Heart right ventricle (tissue), 16 donors: ENCODE measurements at regions of chr16 and their contacts with region 1.

Region 1: DNA sequence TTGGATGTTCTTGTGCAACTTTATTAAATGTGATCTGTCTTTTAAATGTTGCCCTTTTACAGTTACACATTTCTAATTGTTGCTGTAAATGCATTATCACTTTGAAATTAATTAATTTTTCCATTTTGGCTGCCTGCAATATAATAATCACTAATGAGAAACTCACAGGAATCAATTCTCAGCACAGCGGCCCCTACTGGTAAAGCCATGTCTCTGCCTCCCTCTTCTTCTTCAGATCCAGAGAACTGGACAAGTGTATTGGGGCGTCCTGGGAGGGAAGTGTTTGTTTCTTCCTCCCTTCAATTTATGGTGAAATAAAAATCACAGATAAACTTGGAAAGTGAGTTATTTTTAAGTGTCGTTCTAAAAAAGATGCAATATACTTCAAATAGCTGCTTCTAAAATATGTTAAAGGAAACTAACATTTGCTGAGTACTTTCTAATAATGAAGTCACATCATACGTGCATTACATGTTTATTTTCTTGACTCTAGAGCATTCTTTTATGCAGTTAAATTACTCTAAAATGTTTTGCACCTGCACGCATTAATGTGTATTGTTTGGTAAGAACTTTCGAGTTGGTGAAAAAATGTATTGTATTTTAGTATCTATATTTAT is 338.0 kb downstream of the WWOX start:
- DNase-seq: peak in 1 of 2 donors; percentile 19
- ATAC-seq: no peak
- H3K4me3 ChIP-seq: no peak overlapping the region
- H3K27ac ChIP-seq: no peak overlapping the region
- H3K4me1 ChIP-seq: no peaks in the 10 kb centered on the region
- H3K27me3 ChIP-seq: no peaks in the 10 kb centered on the region
- CTCF ChIP-seq: peak; percentile 65 to 95 (median 85)

Region 2: DNA sequence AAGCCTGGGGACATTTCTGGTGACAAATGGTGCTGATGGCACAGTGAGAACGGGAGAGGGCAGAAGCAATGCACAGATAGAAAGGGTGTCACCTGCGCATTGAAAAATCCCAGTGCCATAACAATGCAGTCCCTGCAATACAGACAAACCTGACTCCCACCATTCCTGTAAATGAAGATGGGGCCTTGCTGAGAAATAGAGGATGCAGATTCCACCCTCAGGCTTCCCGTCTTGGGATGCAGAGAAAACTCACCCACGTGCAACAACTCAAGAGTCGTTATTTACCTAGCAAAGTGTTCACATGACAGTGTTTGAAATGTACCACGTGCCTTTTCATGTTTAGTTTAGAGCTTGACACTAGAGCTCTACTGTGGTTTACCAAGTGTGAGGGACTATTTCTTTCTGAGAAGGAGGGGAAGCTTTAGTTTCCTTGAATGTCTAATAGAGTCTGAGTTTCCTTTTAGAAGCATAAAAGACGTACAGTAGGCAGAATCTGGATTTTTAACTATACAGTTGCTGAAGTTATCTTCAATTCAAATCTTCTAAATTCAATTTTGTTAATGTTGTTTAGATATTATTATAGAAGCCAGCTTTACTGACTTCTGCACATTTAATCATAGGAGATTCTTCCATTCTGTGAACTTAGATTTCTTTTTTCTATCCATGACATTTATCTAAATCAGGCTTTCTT is 302.4 kb before region 1 on chr16:
- intact Hi-C with region 1: loop called in 1 of 10 experiments (anchors 10 kb)
- DNase-seq: no peak
- ATAC-seq: no peak
- H3K4me3 ChIP-seq: no peak overlapping the region
- H3K27ac ChIP-seq: no peak overlapping the region
- H3K4me1 ChIP-seq: no peaks in the 10 kb centered on the region
- H3K27me3 ChIP-seq: no peaks in the 10 kb centered on the region
- CTCF ChIP-seq: no peak

Region 3: GRCh38 chr16:78235168-78235800 is 202.2 kb before region 1 on chr16:
- intact Hi-C with region 1: loop called in 5 of 10 experiments (anchors 10 kb)
- DNase-seq: peak; percentile 64 to 71
- ATAC-seq: peak in 7 of 8 donors; percentile 53 to 79 (median 68)
- H3K4me3 ChIP-seq: no peak overlapping the region
- H3K27ac ChIP-seq: no peak overlapping the region
- H3K4me1 ChIP-seq: peaks cover 0 to 20% (median 6%) of the 10 kb centered on the region in 9 donors
- H3K27me3 ChIP-seq: no peaks in the 10 kb centered on the region
- CTCF ChIP-seq: peak; percentile 79 to 93 (median 89)

Region 4: GRCh38 chr16:78249068-78249467 is 188.4 kb before region 1 on chr16:
- intact Hi-C with region 1: loop called in 2 of 10 experiments (anchors 10 kb)
- DNase-seq: peak; percentile 11 to 35
- ATAC-seq: peak in 3 of 8 donors; percentile 25 to 88 (median 46)
- H3K4me3 ChIP-seq: no peak overlapping the region
- H3K27ac ChIP-seq: no peak overlapping the region
- H3K4me1 ChIP-seq: no peaks in the 10 kb centered on the region
- H3K27me3 ChIP-seq: no peaks in the 10 kb centered on the region
- CTCF ChIP-seq: peak in 3 of 9 donors; percentile 20 to 38 (median 23)